HEK293 (cell line): ENCODE measurements at regions of chr6 and their contacts with region 1.

Region 1: DNA sequence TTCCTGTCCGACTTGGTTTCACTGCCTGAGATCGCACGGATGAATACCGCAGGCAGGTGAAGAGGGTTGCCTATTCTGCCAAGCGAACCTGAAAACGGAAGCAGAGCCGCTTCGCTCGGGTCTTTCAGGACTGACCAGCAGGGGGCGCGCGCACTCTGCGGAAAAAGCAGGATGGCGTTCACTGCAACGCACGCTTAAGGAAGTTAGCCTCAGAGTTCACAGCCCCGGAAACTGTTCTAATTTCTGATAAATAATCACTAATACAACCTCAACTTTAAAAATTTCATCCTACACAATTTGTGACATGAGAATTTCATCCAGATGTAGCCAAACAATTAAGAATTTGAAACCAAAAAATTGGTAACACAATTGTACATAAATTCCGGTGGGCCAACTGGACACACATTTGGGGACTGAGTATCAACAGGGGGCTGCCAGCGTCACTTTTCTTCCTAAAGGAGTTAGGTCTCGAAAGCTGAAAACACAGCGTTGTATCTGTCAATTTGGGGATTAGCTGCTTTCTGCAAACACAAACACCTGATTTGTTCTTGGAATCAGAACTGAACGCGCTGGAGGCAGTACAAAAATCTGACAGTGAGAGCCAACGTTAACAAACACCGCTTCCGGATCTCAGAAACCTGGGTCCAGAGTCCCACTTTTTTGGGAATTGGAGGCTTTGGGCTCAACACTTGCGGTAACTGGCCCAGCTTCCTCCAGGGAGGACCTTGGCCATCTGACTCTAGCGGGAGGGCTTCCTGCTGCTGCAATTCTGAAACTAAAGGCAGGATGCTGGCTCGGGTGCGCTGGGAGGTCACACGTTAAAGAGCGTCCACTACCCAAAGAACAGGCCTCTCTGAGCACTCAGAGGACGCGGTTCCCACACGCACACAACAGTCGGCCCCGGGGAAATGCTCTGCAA is 8.8 kb downstream of the PXDC1 start:
- H3K4me3 ChIP-seq: no peak overlapping the region
- H3K27ac ChIP-seq: no peak overlapping the region
- H3K4me1 ChIP-seq: peaks cover 6% of the 10 kb centered on the region; the same call in 1 of the 2 replicates
- CTCF ChIP-seq: peak; percentile 79

Region 2: DNA sequence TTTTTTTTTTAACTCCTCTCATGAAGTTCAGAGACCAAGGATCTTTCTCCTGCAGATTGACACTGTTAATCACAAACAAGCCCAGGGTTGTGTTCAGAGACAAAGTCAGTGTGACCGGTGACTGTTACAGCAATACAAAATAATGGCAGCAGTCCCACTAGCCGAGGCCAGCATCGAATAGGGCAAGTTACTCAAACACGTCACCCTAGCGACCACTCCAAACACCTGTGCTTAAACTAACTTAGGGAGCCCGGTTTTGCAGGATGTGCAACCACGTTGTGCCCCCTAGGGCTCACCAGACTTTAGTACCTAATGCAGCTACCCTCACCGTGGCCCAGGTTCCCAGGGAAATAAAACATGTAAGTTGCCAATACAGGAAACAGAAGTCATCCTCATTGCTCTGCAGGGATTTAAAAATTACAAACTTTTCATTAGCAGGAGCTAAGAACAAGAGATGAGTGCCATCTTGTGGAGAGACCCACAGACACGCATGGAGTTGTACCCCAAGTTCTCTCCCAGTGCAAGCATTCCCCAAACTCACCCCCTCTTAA is 144.5 kb after region 1 on chr6:
- CTCF ChIA-PET with region 1: interaction called, 13 read pairs
- POLR2A ChIA-PET with region 1: no interaction called
- H3K4me3 ChIP-seq: no peak overlapping the region
- H3K27ac ChIP-seq: no peak overlapping the region
- H3K4me1 ChIP-seq: no peaks in the 10 kb centered on the region
- CTCF ChIP-seq: no peak

Region 3: DNA sequence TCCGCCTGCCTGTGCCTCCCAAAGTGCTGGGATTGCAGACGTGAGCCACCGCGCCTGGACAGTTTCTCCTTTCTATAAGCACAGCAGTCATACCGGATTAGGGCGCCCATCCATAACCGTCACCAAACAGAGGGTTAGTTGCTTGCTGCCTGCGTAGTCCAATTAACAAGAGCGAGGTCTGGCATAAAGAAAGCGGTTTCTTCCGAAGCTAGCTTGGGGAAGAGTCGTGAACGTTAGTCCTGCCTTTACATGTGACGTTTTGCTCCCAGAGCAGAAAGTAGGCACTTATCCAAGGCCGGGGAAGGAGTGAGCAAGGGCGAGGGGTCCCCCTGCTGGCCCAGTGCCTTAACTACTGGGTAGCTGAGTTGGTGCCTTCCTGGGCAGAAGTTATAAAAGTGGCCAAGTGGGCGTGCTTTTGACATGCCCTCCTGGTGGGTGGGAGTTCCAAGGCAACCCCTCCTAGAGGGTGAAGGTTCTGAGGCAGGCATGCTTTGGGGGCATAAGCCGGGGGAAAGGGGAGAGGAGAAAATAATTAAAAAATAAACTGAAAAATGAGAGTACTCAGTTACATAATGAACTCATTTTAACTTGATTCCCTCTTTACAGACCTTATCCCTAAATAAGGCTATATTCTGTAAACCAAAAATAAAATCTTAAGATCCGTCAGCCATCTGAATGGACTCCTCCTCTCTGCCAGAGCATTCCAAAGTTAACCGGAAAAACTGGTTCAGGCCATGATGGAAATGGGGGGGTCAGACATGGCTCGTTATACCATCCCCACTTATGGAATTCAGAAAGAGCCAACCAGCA is 248.2 kb after region 1 on chr6:
- CTCF ChIA-PET with region 1: interaction called, 23 read pairs
- POLR2A ChIA-PET with region 1: interaction called, 3 read pairs
- H3K4me3 ChIP-seq: no peak overlapping the region
- H3K27ac ChIP-seq: no peak overlapping the region; the same call in 1 of the 2 replicates
- H3K4me1 ChIP-seq: no peaks in the 10 kb centered on the region
- CTCF ChIP-seq: peak; percentile 94